GM12878 (cell line): ENCODE measurements at regions of chr11 and their contacts with region 1.

Region 1: DNA sequence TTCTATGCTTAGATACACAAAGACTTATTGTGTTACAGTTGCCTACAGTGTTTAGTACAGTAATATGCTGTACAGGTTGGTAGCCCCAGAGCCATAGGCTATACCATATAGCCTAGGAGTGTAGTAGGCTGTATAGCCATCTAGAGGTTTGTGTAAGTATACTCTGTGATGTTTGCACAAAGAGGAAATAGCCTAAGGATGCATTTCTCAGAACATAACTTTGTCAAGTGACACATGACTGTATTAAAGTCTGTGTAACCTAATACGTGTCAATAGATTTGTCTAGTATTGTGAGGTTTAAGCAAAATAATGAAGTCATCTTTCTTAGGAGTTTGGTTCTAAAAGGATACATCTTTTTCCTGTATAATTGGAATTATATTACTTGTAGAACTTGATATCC is 5.5 kb downstream of the ZC3H12C start:
- DNase-seq: no peak
- ATAC-seq: peak; percentile 78
- H3K4me3 ChIP-seq: no peak overlapping the region
- H3K27ac ChIP-seq: no peak overlapping the region
- H3K4me1 ChIP-seq: peaks cover 11% of the 10 kb centered on the region; the same call in 1 of the 2 replicates
- H3K27me3 ChIP-seq: no peaks in the 10 kb centered on the region
- CTCF ChIP-seq: peak; percentile 23 to 41 (median 25); a peak in 3 of 6 replicates
- EP300 ChIP-seq: peak in 1 of 2 experiments; percentile 30; a peak in 1 of 4 replicates
- POLR2A ChIP-seq: no peak
- RAD21 ChIP-seq: peak; percentile 57

Region 2: DNA sequence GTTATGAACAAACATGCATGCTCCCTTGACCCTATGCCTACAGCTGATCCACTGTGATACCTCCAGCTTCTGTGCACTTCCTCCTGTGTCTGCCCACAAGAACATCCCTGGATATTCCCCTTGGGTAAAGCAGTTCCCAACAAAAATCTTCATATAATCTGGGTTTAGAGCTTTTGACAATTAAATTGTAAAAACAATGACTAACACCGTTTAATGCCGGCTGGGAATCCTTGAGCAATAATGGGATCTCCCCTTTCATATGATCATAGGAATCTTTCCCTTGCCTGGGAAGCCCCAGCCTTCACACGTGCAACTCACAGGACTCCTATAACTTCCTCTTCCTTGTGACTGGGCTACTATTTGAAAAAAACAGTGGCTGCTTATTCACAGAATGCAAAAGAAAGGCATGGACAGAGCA is 11.7 kb before region 1 on chr11:
- CTCF ChIA-PET with region 1: interaction called, 3 read pairs
- POLR2A ChIA-PET with region 1: interaction called, 15 read pairs
- RAD21 ChIA-PET with region 1: interaction called, 3 read pairs
- SMC1A ChIA-PET with region 1: interaction called, 8 read pairs
- in situ Hi-C with region 1: no loop called
- intact Hi-C with region 1: no loop called
- DNase-seq: no peak
- ATAC-seq: 0 out of 3 replicates have a peak, but pooled peaks have one; percentile 3
- H3K4me3 ChIP-seq: no peak overlapping the region
- H3K27ac ChIP-seq: no peak overlapping the region
- H3K4me1 ChIP-seq: peaks cover 10% of the 10 kb centered on the region
- H3K27me3 ChIP-seq: no peaks in the 10 kb centered on the region
- CTCF ChIP-seq: no peak
- EP300 ChIP-seq: no peak
- POLR2A ChIP-seq: no peak
- RAD21 ChIP-seq: no peak